ENCODE measurements at regions of chr3 and their contacts with region 1.

Region 1: DNA sequence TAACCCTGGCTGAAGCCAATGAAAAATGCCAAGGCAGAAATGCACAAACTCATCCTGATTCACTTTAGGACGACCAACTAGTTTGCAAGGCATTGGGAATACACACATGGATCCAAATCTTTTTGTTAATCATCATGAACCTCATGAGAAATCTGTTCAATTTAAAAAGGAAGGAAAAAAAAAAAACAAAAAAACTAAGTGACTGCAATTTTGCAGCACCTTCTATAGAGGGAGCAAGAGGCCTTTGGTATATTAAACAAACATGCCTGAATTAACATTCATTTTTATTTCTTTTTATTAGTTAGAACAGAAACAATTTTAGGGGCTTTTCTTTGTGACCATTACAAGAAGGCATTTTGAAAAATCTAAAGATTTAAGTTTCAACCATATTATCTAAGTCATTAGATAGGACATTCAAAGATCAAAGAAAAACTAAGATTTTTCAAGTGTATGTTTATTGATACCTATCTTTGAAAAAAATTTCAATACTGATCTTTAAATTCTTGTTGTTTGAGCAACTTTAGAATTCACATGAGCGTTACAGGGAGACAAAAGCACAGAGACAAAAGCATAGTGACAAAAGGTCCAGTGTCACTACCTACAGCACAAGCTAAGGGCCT is 182.4 kb downstream of the CBLB start:
- DNase-seq: peak in 6 of 9 donors; percentile 17 to 57 (median 48)
- ATAC-seq: peak; percentile 76
- H3K4me3 ChIP-seq: no peak overlapping the region
- H3K4me3 Mint-ChIP-seq: no peak overlapping the region
- H3K27ac ChIP-seq: no peak overlapping the region
- H3K27ac Mint-ChIP-seq: peak overlapping the region in 8 of 9 donors; percentile 18 to 59 (median 48)
- H3K4me1 ChIP-seq: peaks cover 4 to 5% of the 10 kb centered on the region in 2 donors
- H3K4me1 Mint-ChIP-seq: peaks cover 14 to 37% (median 29%) of the 10 kb centered on the region in 7 donors
- H3K27me3 ChIP-seq: no peaks in the 10 kb centered on the region
- H3K27me3 Mint-ChIP-seq: no peaks in the 10 kb centered on the region

Region 2: DNA sequence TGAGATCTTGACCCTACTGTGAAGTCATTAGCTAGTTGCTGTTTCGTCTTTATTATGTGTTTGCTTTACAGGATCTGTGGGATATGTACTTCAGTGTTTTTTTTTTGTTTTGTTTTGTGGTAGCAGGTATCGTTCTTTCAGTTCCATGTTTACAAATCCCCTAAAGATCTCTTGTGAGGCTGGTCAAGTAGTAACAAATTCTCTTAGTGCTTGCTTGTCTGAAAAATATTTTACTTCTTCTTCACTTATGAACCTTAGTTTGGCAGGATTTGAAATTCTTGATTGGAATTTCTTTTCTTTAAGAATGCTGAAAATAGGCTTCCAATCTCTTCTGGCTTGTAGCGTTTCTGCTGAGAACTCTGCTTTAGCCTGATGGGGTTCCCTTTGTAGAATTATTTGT is 555.5 kb before region 1 on chr3:
- CTCF ChIA-PET with region 1: no interaction called
- POLR2A ChIA-PET with region 1: no interaction called
- intact Hi-C with region 1: no loop called
- DNase-seq: no peak
- ATAC-seq: no peak
- H3K4me3 ChIP-seq: no peak overlapping the region
- H3K4me3 Mint-ChIP-seq: no peak overlapping the region
- H3K27ac ChIP-seq: no peak overlapping the region
- H3K27ac Mint-ChIP-seq: no peak overlapping the region
- H3K4me1 ChIP-seq: no peaks in the 10 kb centered on the region
- H3K4me1 Mint-ChIP-seq: no peaks in the 10 kb centered on the region
- H3K27me3 ChIP-seq: no peaks in the 10 kb centered on the region
- H3K27me3 Mint-ChIP-seq: peaks cover 0 to 7% (median 0%) of the 10 kb centered on the region in 5 donors

Region 3: DNA sequence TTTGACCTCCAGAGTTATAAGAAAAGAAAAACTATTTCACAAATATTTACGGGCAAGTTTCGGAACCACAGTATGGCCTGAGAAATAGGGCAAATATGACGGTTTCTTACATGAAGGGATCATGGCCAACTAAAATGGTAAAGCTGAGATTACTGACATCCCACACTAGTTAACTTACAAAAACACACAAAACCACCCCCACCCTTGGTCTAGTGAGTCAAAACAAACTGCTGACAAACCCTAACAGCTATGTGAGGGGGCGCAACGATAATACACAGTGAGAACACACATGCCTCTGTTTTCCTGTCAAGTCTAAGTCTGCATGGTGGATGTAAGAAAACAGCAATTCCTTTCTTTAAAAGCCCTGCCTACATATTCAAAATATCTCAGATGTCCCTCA is 150.1 kb after region 1 on chr3:
- CTCF ChIA-PET with region 1: interaction called, 3 read pairs
- POLR2A ChIA-PET with region 1: no interaction called
- intact Hi-C with region 1: loop called in 1 of 2 experiments (anchors 10 kb)
- DNase-seq: no peak
- ATAC-seq: peak; percentile 65
- H3K4me3 ChIP-seq: no peak overlapping the region
- H3K4me3 Mint-ChIP-seq: peak overlapping the region in 8 of 10 donors; percentile 4 to 46 (median 19)
- H3K27ac ChIP-seq: no peak overlapping the region
- H3K27ac Mint-ChIP-seq: peak overlapping the region in 7 of 9 donors; percentile 6 to 84 (median 42)
- H3K4me1 ChIP-seq: peaks cover 26 to 44% of the 10 kb centered on the region in 2 donors
- H3K4me1 Mint-ChIP-seq: peaks cover 37 to 87% (median 82%) of the 10 kb centered on the region in 7 donors
- H3K27me3 ChIP-seq: no peaks in the 10 kb centered on the region
- H3K27me3 Mint-ChIP-seq: no peaks in the 10 kb centered on the region

Region 4: GRCh38 chr3:106206146-106206545 is 519.8 kb after region 1 on chr3:
- CTCF ChIA-PET with region 1: interaction called, 6 read pairs
- POLR2A ChIA-PET with region 1: no interaction called
- intact Hi-C with region 1: loop called (anchors 1 to 5 kb)
- DNase-seq: peak in 7 of 9 donors; percentile 12 to 48 (median 36)
- ATAC-seq: peak; percentile 81
- H3K4me3 ChIP-seq: peak overlapping the region; percentile 19
- H3K4me3 Mint-ChIP-seq: peak overlapping the region; percentile 51 to 79 (median 72)
- H3K27ac ChIP-seq: peak overlapping the region; percentile 32
- H3K27ac Mint-ChIP-seq: peak overlapping the region; percentile 3 to 91 (median 76)
- H3K4me1 ChIP-seq: peaks cover 14 to 18% of the 10 kb centered on the region in 2 donors
- H3K4me1 Mint-ChIP-seq: peaks cover 13 to 47% (median 40%) of the 10 kb centered on the region in 7 donors
- H3K27me3 ChIP-seq: no peaks in the 10 kb centered on the region
- H3K27me3 Mint-ChIP-seq: no peaks in the 10 kb centered on the region

Region 5: GRCh38 chr3:106413683-106414082 is 727.3 kb after region 1 on chr3:
- CTCF ChIA-PET with region 1: no interaction called
- POLR2A ChIA-PET with region 1: no interaction called
- intact Hi-C with region 1: loop called in 1 of 2 experiments (anchors 10 kb)
- DNase-seq: no peak
- ATAC-seq: no peak
- H3K4me3 ChIP-seq: no peak overlapping the region
- H3K4me3 Mint-ChIP-seq: no peak overlapping the region
- H3K27ac ChIP-seq: no peak overlapping the region
- H3K27ac Mint-ChIP-seq: no peak overlapping the region
- H3K4me1 ChIP-seq: no peaks in the 10 kb centered on the region
- H3K4me1 Mint-ChIP-seq: peaks cover 0 to 2% (median 0%) of the 10 kb centered on the region in 7 donors
- H3K27me3 ChIP-seq: no peaks in the 10 kb centered on the region
- H3K27me3 Mint-ChIP-seq: no peaks in the 10 kb centered on the region

Region 6: DNA sequence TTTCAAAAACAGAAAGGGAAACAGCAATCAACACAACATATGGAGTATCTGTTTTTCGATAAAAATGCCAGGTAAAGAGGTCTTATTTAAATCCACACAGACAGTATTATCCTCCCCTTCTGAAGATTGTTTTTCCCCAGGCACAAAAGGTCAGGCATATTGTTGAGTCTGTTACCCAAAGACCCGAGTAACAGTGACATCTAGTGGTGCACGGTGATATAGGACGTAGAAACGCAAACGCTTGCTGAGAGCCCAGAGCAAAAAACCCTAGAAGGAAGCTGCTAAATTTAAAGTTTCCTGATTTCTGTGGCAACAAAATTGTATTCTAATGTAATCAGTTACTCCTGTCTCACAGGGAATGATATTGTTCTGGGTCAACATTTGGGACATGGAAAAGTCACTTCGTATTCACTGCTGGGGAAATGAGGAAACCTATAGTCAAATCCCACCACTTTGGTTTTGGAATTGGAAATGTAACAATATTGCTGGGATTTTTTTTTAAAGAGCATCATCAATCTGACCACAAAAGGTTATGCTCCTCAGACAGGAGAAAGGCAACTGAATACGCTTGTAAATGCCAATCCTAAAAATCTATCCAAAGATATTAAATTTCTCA is 1378.2 kb after region 1 on chr3:
- CTCF ChIA-PET with region 1: no interaction called
- POLR2A ChIA-PET with region 1: no interaction called
- intact Hi-C with region 1: loop called (anchors 2 to 10 kb)
- DNase-seq: peak; percentile 6 to 57 (median 39)
- ATAC-seq: peak; percentile 82
- H3K4me3 ChIP-seq: no peak overlapping the region
- H3K4me3 Mint-ChIP-seq: no peak overlapping the region
- H3K27ac ChIP-seq: no peak overlapping the region
- H3K27ac Mint-ChIP-seq: no peak overlapping the region
- H3K4me1 ChIP-seq: peaks cover 4 to 7% of the 10 kb centered on the region in 2 donors
- H3K4me1 Mint-ChIP-seq: peaks cover 6 to 15% (median 10%) of the 10 kb centered on the region in 7 donors
- H3K27me3 ChIP-seq: no peaks in the 10 kb centered on the region
- H3K27me3 Mint-ChIP-seq: peaks cover 0 to 17% (median 8%) of the 10 kb centered on the region in 5 donors

Measured in naive thymus-derived CD4-positive, alpha-beta T cell (primary cell).